ENCODE measurements at regions of chr20 and their contacts with region 1.

Region 1: DNA sequence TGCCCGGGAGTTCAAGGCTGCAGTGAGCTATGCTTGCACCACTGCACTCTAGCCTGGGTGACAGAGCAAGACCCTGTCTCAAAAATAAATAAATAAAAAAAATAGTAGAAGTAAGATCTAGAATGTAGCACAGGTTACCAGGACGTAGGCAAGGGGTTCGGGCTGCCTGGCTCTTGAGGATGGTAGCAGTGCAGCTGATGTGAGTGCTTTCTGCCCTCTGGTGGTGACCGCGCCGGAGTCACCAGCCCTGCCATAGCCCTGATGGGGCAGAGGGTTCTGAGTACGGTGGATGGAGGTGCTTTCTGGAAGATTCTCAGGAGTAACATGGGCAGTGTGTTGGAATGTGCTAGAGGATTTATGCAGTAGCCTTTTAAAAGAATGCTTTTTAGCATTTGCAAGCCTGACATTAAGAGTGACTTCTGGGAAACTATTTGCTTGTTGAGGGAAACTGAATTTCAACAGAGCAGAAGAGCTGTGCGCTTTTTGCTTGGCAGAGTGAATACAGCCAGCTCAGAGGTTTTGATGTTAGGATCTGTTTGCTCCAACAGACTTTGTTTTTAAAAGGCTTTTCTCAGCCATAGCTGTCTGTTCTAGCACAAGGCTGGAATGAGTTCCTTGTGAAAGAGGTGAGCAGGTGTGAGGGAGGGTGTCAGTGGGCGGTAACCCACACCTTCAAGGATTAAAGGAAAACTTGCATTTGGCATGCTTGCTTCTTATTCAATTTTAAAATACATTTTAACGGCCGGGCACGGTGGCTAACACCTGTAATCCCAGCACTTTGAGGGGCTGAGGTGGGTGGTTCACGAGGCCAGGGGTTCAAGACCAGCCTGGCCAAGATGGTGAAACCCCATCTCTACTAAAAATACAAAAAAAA is 65.9 kb downstream of the PTPN1 start:
- DNase-seq: peak; percentile 83
- ATAC-seq: peak; percentile 77 to 79
- H3K4me3 ChIP-seq: no peak overlapping the region
- H3K27ac ChIP-seq: no peak overlapping the region
- H3K4me1 ChIP-seq: peaks cover 40% of the 10 kb centered on the region
- H3K27me3 ChIP-seq: no peaks in the 10 kb centered on the region
- CTCF ChIP-seq: peak; percentile 82

Region 2: GRCh38 chr20:50460460-50461267 is 115.4 kb before region 1 on chr20:
- intact Hi-C with region 1: no loop called
- DNase-seq: peak; percentile 93
- ATAC-seq: peak; percentile 92 to 96
- H3K4me3 ChIP-seq: no peak overlapping the region
- H3K27ac ChIP-seq: peak overlapping the region; percentile 56
- H3K4me1 ChIP-seq: peaks cover 35% of the 10 kb centered on the region
- H3K27me3 ChIP-seq: no peaks in the 10 kb centered on the region
- CTCF ChIP-seq: peak; percentile 93

Region 3: DNA sequence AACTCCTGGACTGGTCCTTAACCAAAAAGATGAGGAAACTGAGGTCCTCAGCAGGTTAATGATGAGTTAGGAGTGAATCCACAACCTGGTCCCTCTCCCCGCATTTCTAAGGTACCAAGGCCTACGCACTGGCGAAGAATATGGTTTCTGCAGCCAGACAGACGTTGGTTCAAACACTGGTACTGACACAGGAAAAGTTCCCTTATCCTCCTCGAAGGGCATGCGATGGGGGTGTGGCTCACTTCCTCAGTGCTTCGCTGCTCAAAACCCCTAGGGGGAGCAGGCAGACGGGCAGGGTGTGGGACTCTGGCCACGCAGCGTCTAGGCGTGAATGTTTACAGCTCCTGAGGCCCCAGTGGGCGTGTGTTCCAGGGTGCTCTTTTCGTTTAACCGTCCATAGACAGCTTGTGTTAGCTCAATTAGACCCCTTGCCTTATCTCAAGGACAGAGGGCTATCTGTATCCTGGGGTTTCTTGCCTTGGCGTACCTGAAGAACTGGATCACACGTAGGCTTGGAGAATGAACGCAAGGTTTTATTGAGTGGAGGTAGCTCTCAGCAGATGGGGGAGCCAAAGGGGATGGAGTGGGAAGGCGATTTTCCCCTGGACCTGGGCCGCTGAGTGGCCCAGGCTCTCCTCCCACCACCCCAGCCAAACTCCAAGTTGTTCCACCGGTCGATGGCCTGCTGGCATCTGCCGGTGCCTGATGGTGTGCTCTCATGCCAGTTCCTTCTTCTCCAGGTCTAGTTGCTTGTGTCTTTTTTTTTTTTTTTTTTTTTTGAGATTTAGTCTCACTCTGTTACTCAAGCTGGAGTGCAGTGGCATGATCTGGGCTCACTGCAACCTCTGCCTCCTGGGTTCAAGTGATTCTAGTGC is 97.7 kb before region 1 on chr20:
- intact Hi-C with region 1: loop called (anchors 10 kb)
- DNase-seq: peak; percentile 88
- ATAC-seq: peak; percentile 93 to 94
- H3K4me3 ChIP-seq: no peak overlapping the region
- H3K27ac ChIP-seq: no peak overlapping the region
- H3K4me1 ChIP-seq: peaks cover 28% of the 10 kb centered on the region
- H3K27me3 ChIP-seq: no peaks in the 10 kb centered on the region
- CTCF ChIP-seq: peak; percentile 83

Region 4: GRCh38 chr20:50509935-50510705 is 66.0 kb before region 1 on chr20 and contains the start of gene PTPN1:
- intact Hi-C with region 1: loop called (anchors 10 kb)
- DNase-seq: peak; percentile 98
- ATAC-seq: peak; percentile 96 to 98
- H3K4me3 ChIP-seq: peak within 1 kb of the TSS; percentile 98
- H3K27ac ChIP-seq: peak within 1 kb of the TSS; percentile 98
- H3K4me1 ChIP-seq: peaks cover 51% of the 10 kb centered on the region
- H3K27me3 ChIP-seq: no peaks in the 10 kb centered on the region
- CTCF ChIP-seq: no peak
- total RNA-seq, gene PTPN1: 78.2 TPM

Measured in lower lobe of right lung (tissue), 2 donors.